AG04449 (cell line): ENCODE measurements at regions of chr4 and their contacts with region 1.

Region 1: GRCh38 chr4:145557720-145558119 is 61.5 kb upstream of the MMAA start:
- DNase-seq: no peak
- H3K4me3 ChIP-seq: no peak overlapping the region
- CTCF ChIP-seq: peak; percentile 90

Region 2: GRCh38 chr4:145216535-145216934 is 341.2 kb before region 1 on chr4:
- CTCF ChIA-PET with region 1: interaction called, 37 read pairs
- POLR2A ChIA-PET with region 1: no interaction called
- DNase-seq: no peak
- H3K4me3 ChIP-seq: no peak overlapping the region
- CTCF ChIP-seq: peak; percentile 33

Region 3: DNA sequence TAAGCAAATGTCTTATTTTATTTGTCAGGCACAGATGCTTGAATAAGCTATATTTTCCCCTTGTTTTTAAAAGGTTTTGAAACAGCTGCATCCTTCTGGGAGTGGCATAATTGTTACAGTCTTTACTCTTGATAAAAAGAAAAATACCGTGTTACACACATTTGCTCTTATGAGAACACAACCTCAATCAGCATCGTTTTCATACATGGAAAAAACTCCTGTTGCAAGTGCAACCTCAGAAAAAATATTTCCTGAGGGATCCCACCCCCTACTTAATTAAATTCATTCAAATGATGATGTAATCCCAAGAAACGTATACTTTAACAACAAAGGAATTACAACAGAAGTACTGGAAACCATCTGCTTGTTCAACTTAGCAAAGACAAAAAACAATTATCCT is 17.5 kb before region 1 on chr4:
- CTCF ChIA-PET with region 1: interaction called, 35 read pairs
- POLR2A ChIA-PET with region 1: no interaction called
- DNase-seq: no peak
- H3K4me3 ChIP-seq: no peak overlapping the region
- CTCF ChIP-seq: no peak

Region 4: GRCh38 chr4:145545538-145546174 is 12.1 kb before region 1 on chr4:
- CTCF ChIA-PET with region 1: interaction called, 35 read pairs
- POLR2A ChIA-PET with region 1: no interaction called
- DNase-seq: peak; percentile 77
- H3K4me3 ChIP-seq: no peak overlapping the region
- CTCF ChIP-seq: no peak